ENCODE measurements at regions of chr10 and their contacts with region 1.

Region 1: GRCh38 chr10:24209946-24210491 is 1.1 kb downstream of the KIAA1217 start:
- DNase-seq: peak; percentile 8
- H3K4me3 Mint-ChIP-seq: peak overlapping the region; percentile 83
- H3K27ac Mint-ChIP-seq: peak overlapping the region; percentile 90
- H3K4me1 Mint-ChIP-seq: peaks cover 39% of the 10 kb centered on the region
- H3K27me3 Mint-ChIP-seq: peaks cover 24% of the 10 kb centered on the region

Region 2: DNA sequence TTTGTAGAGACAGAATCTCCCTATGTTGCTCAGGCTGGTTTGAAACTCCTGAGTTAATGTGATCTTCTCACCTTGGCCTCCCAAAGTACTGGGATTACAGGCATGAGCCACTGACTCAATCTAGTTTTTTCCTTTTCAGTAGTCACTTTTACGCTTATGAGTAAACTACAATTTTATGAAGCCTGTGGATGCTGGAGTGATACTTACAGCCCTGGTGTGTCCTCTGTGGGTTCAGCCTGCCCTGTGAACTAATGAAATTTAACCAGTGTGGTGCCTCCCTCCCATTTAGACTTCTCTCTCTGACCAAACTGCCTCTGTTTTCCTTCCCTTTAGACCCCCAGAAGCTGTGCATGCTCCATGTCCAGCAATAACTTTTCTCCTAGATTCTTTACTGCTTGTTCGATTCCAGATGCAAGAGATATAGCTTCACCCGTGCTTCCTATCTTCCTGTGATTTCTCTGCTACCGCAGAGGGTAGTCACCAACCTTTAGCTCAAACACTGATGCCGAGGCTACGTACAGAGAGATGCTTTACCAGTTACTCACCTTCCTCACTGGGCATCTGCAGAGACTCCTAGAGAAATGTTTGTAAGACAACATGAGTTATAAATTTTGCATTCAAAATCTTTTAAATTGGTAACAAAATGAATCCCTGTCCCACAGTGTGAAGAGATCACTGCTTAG is 89.7 kb after region 1 on chr10:
- intact Hi-C with region 1: loop called (anchors 5 kb)
- DNase-seq: no peak
- H3K4me3 Mint-ChIP-seq: no peak overlapping the region
- H3K27ac Mint-ChIP-seq: no peak overlapping the region
- H3K4me1 Mint-ChIP-seq: no peaks in the 10 kb centered on the region
- H3K27me3 Mint-ChIP-seq: no peaks in the 10 kb centered on the region

Region 3: DNA sequence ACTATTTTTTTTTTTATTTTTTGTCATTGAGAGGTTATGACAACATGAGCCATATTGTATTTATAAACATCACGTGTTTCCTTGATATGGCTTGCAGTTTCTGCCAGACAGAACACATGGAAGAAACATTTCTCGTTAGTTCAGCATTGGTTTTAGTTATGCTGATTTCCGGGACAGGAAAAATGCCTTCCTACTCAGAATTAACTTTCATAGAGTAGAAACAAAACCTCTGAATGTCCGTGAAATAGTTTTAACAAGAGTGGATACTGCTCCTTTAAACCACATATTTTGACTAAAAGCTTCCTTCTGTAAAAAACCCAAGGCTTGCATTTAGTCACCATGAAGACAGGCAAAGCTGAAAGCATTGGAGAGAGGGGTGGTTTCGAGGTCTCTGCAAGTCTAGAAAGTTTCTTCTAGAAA is 239.3 kb after region 1 on chr10:
- intact Hi-C with region 1: loop called (anchors 1 kb)
- DNase-seq: no peak
- H3K4me3 Mint-ChIP-seq: peak overlapping the region; percentile 4
- H3K27ac Mint-ChIP-seq: peak overlapping the region; percentile 72
- H3K4me1 Mint-ChIP-seq: peaks cover 41% of the 10 kb centered on the region
- H3K27me3 Mint-ChIP-seq: peaks cover 14% of the 10 kb centered on the region

Region 4: DNA sequence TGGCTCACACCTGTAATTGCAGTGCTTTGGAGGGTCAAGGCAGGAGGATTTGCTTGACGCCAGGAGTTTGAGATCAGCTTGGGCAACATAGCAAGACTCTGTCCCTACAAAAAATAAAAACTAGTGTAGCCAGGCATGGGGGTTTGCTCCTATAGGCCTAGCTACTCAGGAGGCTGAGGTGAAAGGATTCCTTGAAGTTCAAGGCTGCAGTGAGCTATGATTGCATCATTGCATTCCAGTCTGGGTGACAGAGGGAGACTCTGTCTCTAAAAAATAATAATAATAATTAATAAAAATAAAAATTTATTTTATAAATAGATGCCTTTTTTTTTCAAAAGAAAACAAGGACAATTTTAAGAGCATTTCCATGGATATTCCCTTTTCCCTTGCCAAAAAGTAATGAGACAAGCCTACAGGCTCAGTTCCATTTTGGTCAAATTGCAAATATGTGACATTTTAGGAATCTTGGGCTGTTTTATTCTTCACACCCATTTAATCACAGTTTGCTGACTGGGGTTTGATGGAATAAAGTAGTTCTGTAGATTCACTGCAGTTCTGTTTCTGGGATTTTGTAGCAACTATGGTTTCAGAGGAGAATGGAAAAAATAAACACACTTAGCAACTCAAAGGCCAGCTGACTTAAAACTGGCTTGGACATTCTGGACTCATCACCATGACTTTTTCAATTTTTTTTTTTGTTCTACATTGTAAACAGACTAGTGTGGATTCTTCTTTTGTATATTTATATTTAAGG is 562.1 kb after region 1 on chr10:
- intact Hi-C with region 1: no loop called
- DNase-seq: no peak
- H3K4me3 Mint-ChIP-seq: no peak overlapping the region
- H3K27ac Mint-ChIP-seq: no peak overlapping the region
- H3K4me1 Mint-ChIP-seq: peaks cover 5% of the 10 kb centered on the region
- H3K27me3 Mint-ChIP-seq: no peaks in the 10 kb centered on the region

Measured in activated T-helper 1 cell treated with anti-CD3 and anti-CD28 coated beads, Interleukin-12 subunit alpha, Interleukin-12 subunit beta, Interleukin-2, Interleukin-4 antibody, amounts not matched to agents 30 ng/mL and 10 ng/mL and 1 ng/mL, durations not matched to agents 14 hours and 24 hours and 36 hours (primary cell).